ENCODE measurements at regions of chr1 and their contacts with region 1.

Region 1: DNA sequence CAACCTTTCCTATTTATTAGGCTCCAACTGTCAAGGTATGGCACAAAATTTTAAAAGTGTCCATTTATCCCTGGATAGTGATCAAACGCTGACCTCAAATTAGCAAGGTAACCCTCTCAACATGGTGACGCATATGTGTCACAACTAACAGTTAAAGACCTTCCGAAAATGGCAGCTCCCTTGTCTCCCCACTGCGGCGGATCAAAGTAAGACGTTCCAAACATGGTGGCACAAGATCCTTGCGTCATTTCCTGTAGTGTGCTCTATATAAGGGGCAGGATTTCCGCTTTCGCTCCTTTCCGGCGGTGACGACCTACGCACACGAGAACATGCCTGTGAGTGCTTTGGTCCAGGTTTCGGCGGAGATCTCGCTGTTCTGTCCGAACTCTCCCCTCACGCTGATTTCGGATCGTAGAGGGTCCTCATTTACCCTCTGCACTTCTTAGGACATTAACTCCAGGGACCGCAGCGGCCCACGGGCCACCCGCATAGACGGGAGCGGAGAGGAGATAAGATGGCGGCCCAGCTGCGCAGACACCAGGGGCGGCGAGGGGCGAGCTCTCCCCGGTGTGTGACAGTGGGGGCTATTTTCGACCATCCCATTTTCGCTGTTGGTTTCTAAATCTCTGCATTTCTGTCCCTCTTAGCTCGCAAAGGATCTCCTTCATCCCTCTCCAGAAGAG is at the start of gene RPS27:
- DNase-seq: peak; percentile 77 to 98 (median 84)
- ATAC-seq: peak; percentile 85
- H3K4me3 ChIP-seq: peak within 1 kb of the TSS; percentile 71
- H3K4me3 Mint-ChIP-seq: peak within 1 kb of the TSS; percentile 97
- H3K27ac ChIP-seq: peak within 1 kb of the TSS; percentile 97
- H3K27ac Mint-ChIP-seq: peak within 1 kb of the TSS; percentile 96
- H3K4me1 ChIP-seq: peaks cover 40% of the 10 kb centered on the region
- H3K4me1 Mint-ChIP-seq: peaks cover 49% of the 10 kb centered on the region
- H3K27me3 ChIP-seq: peaks cover 0 to 3% of the 10 kb centered on the region in 2 experiments
- H3K27me3 Mint-ChIP-seq: peaks cover 9% of the 10 kb centered on the region
- CTCF ChIP-seq: no peak
- total RNA-seq, gene RPS27: 7,636 to 8,442 TPM

Region 2: GRCh38 chr1:153510984-153511410 is 479.6 kb before region 1 on chr1:
- CTCF ChIA-PET with region 1: no interaction called
- POLR2A ChIA-PET with region 1: no interaction called
- intact Hi-C with region 1: loop called in 1 of 2 experiments (anchors 2 kb)
- DNase-seq: peak; percentile 64 to 91 (median 75)
- ATAC-seq: peak; percentile 79
- H3K4me3 ChIP-seq: no peak overlapping the region
- H3K4me3 Mint-ChIP-seq: no peak overlapping the region
- H3K27ac ChIP-seq: no peak overlapping the region
- H3K27ac Mint-ChIP-seq: no peak overlapping the region
- H3K4me1 ChIP-seq: peaks cover 17% of the 10 kb centered on the region
- H3K4me1 Mint-ChIP-seq: peaks cover 8% of the 10 kb centered on the region
- H3K27me3 ChIP-seq: no peaks in the 10 kb centered on the region
- H3K27me3 Mint-ChIP-seq: no peaks in the 10 kb centered on the region
- CTCF ChIP-seq: peak; percentile 98

Region 3: DNA sequence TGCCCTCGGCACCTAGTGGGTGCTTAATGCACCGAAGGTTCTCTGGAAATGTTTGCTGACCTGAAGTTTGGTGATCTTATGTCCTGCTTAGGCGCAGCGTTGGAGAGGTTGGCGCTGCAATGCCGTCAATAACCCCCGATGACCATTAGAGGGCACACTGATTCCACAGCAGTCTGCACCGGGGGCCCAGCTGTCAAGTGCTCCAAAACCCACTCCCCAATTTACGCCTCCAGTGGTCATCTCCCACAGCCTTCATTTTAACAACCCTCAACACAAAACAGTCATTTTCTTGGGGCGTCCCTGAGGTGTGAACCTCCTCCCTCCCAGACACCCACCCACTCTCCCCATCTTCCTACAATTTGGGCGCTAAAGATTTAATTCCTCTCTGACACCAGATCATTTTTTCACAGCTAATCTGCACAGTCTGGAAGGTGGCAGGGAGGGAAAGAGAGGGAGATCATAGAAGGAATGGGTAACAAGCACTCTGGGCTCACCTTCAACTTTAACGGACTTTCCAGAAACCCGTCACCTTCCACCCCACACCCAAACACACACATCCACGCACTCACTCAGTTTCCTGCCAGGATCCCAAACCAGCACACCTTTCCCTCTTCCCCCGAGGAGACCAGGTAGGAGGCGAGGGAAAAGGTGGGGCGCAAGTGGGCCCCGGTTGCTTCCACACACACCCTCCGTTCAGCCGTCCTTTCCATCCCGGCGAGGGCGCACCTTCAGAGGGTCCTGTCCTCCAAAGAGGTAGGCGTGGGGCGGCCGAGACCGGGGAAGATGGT is 312.7 kb before region 1 on chr1:
- CTCF ChIA-PET with region 1: no interaction called
- POLR2A ChIA-PET with region 1: interaction called, 3 read pairs
- intact Hi-C with region 1: loop called (anchors 2 to 5 kb)
- DNase-seq: peak in 13 of 14 experiments; percentile 22 to 74 (median 38)
- ATAC-seq: peak; percentile 51
- H3K4me3 ChIP-seq: peak overlapping the region; percentile 36
- H3K4me3 Mint-ChIP-seq: peak overlapping the region; percentile 71
- H3K27ac ChIP-seq: no peak overlapping the region
- H3K27ac Mint-ChIP-seq: no peak overlapping the region
- H3K4me1 ChIP-seq: peaks cover 25% of the 10 kb centered on the region
- H3K4me1 Mint-ChIP-seq: peaks cover 20% of the 10 kb centered on the region
- H3K27me3 ChIP-seq: peaks cover 30 to 35% of the 10 kb centered on the region in 2 experiments
- H3K27me3 Mint-ChIP-seq: peaks cover 57% of the 10 kb centered on the region
- CTCF ChIP-seq: peak; percentile 73

Region 4: DNA sequence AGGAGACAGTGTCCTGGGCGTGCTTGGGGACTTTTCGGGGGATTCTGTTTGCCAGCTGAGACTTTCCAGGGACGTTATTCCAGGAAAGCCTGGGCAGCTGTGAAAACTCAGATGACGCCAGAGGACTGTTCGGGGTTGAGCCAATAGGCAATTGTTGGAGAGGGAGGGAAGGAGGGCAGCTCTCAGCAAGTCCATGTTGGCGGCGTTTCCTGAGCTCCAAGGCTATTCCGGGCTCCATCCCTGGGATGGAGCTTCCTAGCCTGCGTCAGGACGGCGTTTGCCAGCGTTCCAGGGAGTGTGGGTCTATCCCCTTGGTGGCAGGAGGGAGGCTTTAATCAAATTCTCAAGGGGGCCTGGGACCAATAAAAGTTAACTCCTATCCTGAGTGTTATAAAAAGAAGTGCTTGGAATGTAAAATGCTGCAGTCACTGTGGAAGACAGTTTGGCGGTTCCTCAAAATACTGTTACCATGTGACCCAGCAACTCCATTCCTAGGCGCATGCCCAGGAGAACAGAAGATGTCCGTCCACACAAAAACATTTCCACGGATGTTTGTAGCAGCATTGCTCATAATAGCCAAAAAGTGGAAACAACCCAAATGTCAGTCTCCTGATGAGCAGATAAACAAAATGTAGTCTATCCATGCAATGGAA is 200.2 kb before region 1 on chr1:
- CTCF ChIA-PET with region 1: interaction called, 4 read pairs
- POLR2A ChIA-PET with region 1: interaction called, 15 read pairs
- intact Hi-C with region 1: no loop called
- DNase-seq: peak in 2 of 14 experiments; percentile 51 to 58
- ATAC-seq: peak; percentile 17
- H3K4me3 ChIP-seq: no peak overlapping the region
- H3K4me3 Mint-ChIP-seq: peak overlapping the region; percentile 18
- H3K27ac ChIP-seq: no peak overlapping the region
- H3K27ac Mint-ChIP-seq: no peak overlapping the region
- H3K4me1 ChIP-seq: peaks cover 9% of the 10 kb centered on the region
- H3K4me1 Mint-ChIP-seq: peaks cover 18% of the 10 kb centered on the region
- H3K27me3 ChIP-seq: no peaks in the 10 kb centered on the region
- H3K27me3 Mint-ChIP-seq: peaks cover 21% of the 10 kb centered on the region
- CTCF ChIP-seq: no peak

Region 5: GRCh38 chr1:153922972-153923925 is 67.4 kb before region 1 on chr1 and contains the start of gene GATAD2B:
- CTCF ChIA-PET with region 1: interaction called, 6 read pairs
- POLR2A ChIA-PET with region 1: interaction called, 44 read pairs
- intact Hi-C with region 1: loop called in 1 of 2 experiments (anchors 2 kb)
- DNase-seq: peak; percentile 97 to 100 (median 98)
- ATAC-seq: peak; percentile 89
- H3K4me3 ChIP-seq: peak within 1 kb of the TSS; percentile 91
- H3K4me3 Mint-ChIP-seq: peak within 1 kb of the TSS; percentile 96
- H3K27ac ChIP-seq: peak within 1 kb of the TSS; percentile 95
- H3K27ac Mint-ChIP-seq: peak within 1 kb of the TSS; percentile 99
- H3K4me1 ChIP-seq: peaks cover 48% of the 10 kb centered on the region
- H3K4me1 Mint-ChIP-seq: peaks cover 56% of the 10 kb centered on the region
- H3K27me3 ChIP-seq: no peaks in the 10 kb centered on the region
- H3K27me3 Mint-ChIP-seq: peaks cover 6% of the 10 kb centered on the region
- CTCF ChIP-seq: no peak
- total RNA-seq, gene GATAD2B: 51.6 to 52.3 TPM

Region 6: GRCh38 chr1:153977250-153978240 is 13.1 kb before region 1 on chr1 and contains the start of gene JTB:
- CTCF ChIA-PET with region 1: interaction called, 13 read pairs
- POLR2A ChIA-PET with region 1: interaction called, 120 read pairs
- intact Hi-C with region 1: loop called (anchors 1 kb)
- DNase-seq: peak; percentile 68 to 91 (median 82)
- ATAC-seq: peak; percentile 96
- H3K4me3 ChIP-seq: peak within 1 kb of the TSS; percentile 82
- H3K4me3 Mint-ChIP-seq: peak within 1 kb of the TSS; percentile 98
- H3K27ac ChIP-seq: peak within 1 kb of the TSS; percentile 80 to 83
- H3K27ac Mint-ChIP-seq: peak within 1 kb of the TSS; percentile 94
- H3K4me1 ChIP-seq: peaks cover 31% of the 10 kb centered on the region
- H3K4me1 Mint-ChIP-seq: peaks cover 42% of the 10 kb centered on the region
- H3K27me3 ChIP-seq: no peaks in the 10 kb centered on the region
- H3K27me3 Mint-ChIP-seq: no peaks in the 10 kb centered on the region
- CTCF ChIP-seq: no peak
- total RNA-seq, gene JTB: 80.4 to 80.9 TPM

Region 7: GRCh38 chr1:154129391-154129970 is 138.9 kb after region 1 on chr1:
- CTCF ChIA-PET with region 1: no interaction called
- POLR2A ChIA-PET with region 1: no interaction called
- intact Hi-C with region 1: no loop called
- DNase-seq: no peak
- ATAC-seq: no peak
- H3K4me3 ChIP-seq: no peak overlapping the region
- H3K4me3 Mint-ChIP-seq: no peak overlapping the region
- H3K27ac ChIP-seq: no peak overlapping the region
- H3K27ac Mint-ChIP-seq: no peak overlapping the region
- H3K4me1 ChIP-seq: no peaks in the 10 kb centered on the region
- H3K4me1 Mint-ChIP-seq: no peaks in the 10 kb centered on the region
- H3K27me3 ChIP-seq: no peaks in the 10 kb centered on the region
- H3K27me3 Mint-ChIP-seq: no peaks in the 10 kb centered on the region
- CTCF ChIP-seq: no peak

Region 8: GRCh38 chr1:154220071-154220969 is 229.7 kb after region 1 on chr1 and contains the start of gene UBAP2L:
- CTCF ChIA-PET with region 1: no interaction called
- POLR2A ChIA-PET with region 1: interaction called, 34 read pairs
- intact Hi-C with region 1: loop called in 1 of 2 experiments (anchors 5 kb)
- DNase-seq: peak; percentile 97 to 100 (median 99)
- ATAC-seq: peak; percentile 83
- H3K4me3 ChIP-seq: peak within 1 kb of the TSS; percentile 95
- H3K4me3 Mint-ChIP-seq: peak within 1 kb of the TSS; percentile 91
- H3K27ac ChIP-seq: peak within 1 kb of the TSS; percentile 99
- H3K27ac Mint-ChIP-seq: peak within 1 kb of the TSS; percentile 93
- H3K4me1 ChIP-seq: peaks cover 43% of the 10 kb centered on the region
- H3K4me1 Mint-ChIP-seq: peaks cover 74% of the 10 kb centered on the region
- H3K27me3 ChIP-seq: no peaks in the 10 kb centered on the region
- H3K27me3 Mint-ChIP-seq: no peaks in the 10 kb centered on the region
- CTCF ChIP-seq: no peak
- total RNA-seq, gene UBAP2L: 224 to 234 TPM

Region 9: GRCh38 chr1:154807048-154807591 is 816.5 kb after region 1 on chr1:
- CTCF ChIA-PET with region 1: no interaction called
- POLR2A ChIA-PET with region 1: no interaction called
- intact Hi-C with region 1: no loop called
- DNase-seq: peak in 1 of 14 experiments; percentile 13
- ATAC-seq: no peak
- H3K4me3 ChIP-seq: no peak overlapping the region
- H3K4me3 Mint-ChIP-seq: no peak overlapping the region
- H3K27ac ChIP-seq: no peak overlapping the region
- H3K27ac Mint-ChIP-seq: no peak overlapping the region
- H3K4me1 ChIP-seq: no peaks in the 10 kb centered on the region
- H3K4me1 Mint-ChIP-seq: no peaks in the 10 kb centered on the region
- H3K27me3 ChIP-seq: peaks cover 0 to 5% of the 10 kb centered on the region in 2 experiments
- H3K27me3 Mint-ChIP-seq: peaks cover 15% of the 10 kb centered on the region
- CTCF ChIP-seq: no peak